Sigmoid colon (tissue), 7 donors: ENCODE measurements at regions of chr9 and their contacts with region 1.

Region 1: GRCh38 chr9:14868772-14869583 is 41.2 kb downstream of the FREM1 start:
- DNase-seq: no peak
- H3K4me3 ChIP-seq: no peak overlapping the region
- H3K27ac ChIP-seq: peak overlapping the region in 3 of 4 donors; percentile 49 to 88 (median 79)
- H3K4me1 ChIP-seq: peaks cover 0 to 47% (median 40%) of the 10 kb centered on the region in 4 donors
- H3K27me3 ChIP-seq: no peaks in the 10 kb centered on the region
- CTCF ChIP-seq: no peak
- EP300 ChIP-seq: no peak
- POLR2A ChIP-seq: no peak

Region 2: DNA sequence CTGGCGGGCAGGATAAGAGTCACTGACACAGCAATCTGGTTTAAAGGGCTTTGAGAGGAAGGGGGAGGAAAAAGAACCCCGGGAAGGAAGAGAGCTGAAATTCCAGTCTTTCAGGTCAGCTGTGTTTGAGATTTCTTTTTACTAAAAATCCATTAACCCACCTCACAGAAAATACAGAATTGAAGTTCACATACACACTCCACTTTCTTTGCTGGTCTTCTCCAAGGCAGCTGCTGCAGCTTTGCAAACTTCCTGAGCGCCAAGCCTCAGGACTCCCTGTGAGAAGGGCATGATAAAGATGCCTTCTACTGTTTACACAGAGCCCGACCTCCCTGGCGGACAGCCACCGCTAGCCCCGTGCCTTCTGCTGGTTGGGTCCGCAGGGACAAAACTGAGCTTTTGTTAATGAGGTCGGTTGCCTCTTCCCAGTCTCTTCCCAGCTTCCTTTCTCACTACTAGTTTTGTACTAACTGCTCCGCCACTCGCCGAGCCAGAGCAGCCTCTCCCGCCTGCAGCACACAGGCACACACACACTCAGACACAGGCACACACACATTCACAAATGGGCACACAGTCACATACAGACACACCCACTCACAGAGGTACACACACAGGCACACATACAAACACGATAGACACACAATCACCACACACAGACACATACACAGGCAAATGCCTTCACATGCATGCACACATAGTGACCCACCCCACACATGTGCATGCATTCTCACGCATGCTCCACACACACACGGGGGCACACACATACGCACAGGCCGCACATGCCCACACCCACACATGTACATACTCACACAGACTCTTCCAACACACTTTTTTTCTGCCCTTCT is 41.2 kb after region 1 on chr9 and contains the start of gene FREM1:
- intact Hi-C with region 1: loop called (anchors 5 kb)
- DNase-seq: peak; percentile 80
- H3K4me3 ChIP-seq: peak within 1 kb of the TSS; percentile 26 to 54 (median 42)
- H3K27ac ChIP-seq: peak within 1 kb of the TSS; percentile 44 to 87 (median 74)
- H3K4me1 ChIP-seq: peaks cover 0 to 57% (median 35%) of the 10 kb centered on the region in 4 donors
- H3K27me3 ChIP-seq: no peaks in the 10 kb centered on the region
- CTCF ChIP-seq: no peak
- EP300 ChIP-seq: no peak
- POLR2A ChIP-seq: no peak
- total RNA-seq, gene FREM1: 10.6 to 45.1 (median 16.6) TPM

Region 3: DNA sequence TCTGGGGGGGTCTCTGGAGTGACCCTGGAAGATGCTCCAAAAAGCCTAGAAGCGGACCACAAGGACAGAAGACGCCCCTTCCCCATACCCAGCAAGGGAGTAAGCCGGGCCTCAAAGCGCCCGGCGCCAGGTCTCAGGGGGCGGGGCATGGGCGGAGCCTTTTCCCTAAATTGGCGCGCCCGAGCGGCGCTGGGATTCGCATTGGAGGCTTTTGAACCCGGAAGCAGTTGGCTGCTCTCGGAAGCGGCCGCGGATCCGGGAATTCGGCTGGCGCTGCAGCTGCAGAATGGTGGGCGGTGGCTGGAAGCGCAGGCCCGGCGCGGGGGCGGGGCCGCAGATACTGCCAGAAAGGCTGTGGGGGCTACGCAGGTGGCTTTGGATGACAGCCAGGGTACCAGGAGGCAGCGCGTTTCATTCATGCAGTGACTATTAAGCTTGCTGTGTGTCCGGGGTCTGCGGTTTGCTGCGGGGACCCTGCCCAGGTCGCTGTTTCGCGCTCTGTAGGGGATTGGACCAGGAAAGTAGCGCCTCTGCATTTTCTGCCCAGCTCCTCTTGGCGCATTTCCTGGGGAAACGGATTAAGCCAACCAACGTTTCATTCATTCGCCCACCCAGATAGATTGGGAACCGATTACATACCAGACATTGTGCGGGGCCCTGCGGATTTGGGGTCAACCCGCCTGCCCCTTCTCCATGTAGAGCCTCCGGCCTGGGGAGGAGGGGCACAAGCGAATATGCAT is 124.3 kb after region 1 on chr9:
- intact Hi-C with region 1: loop called (anchors 10 kb)
- DNase-seq: peak; percentile 93
- H3K4me3 ChIP-seq: peak overlapping the region; percentile 49 to 62 (median 58)
- H3K27ac ChIP-seq: peak overlapping the region in 3 of 4 donors; percentile 48 to 73 (median 62)
- H3K4me1 ChIP-seq: peaks cover 0 to 18% (median 2%) of the 10 kb centered on the region in 4 donors
- H3K27me3 ChIP-seq: no peaks in the 10 kb centered on the region
- CTCF ChIP-seq: no peak
- EP300 ChIP-seq: peak in 1 of 4 donors; percentile 29
- POLR2A ChIP-seq: peak in 1 of 2 donors; percentile 26

Region 4: DNA sequence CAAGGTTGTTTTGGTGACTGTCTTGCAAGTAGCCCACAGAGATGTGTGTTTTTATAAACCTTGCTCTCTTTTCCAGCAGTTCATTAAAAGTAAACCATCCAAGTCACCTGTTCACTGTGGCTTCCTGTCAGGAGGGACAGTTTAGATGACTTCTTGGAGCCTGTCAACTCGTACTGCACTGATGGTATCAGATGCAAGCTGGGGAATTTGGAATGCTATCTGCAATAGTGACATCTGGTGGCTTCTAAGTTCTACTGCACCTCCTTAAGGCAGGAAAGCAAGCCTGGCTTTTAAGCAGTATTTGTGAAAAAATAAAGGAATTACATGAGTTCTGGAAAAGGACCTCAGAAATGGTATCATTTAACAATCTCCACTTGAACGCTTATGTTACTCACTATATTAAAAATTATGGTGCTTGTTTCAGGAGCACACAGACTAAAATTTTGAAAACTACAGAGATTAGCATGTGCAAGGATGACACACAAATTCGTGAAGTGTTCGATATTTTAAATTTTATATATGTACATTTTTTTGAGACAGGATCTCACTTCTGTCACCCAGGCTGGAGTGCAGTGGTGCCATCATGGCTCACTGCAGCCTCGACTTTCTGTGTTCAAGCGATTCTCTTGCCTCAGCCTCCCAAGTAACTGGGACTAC is 274.0 kb after region 1 on chr9:
- intact Hi-C with region 1: no loop called
- DNase-seq: no peak
- H3K4me3 ChIP-seq: no peak overlapping the region
- H3K27ac ChIP-seq: no peak overlapping the region
- H3K4me1 ChIP-seq: peaks cover 0 to 21% (median 8%) of the 10 kb centered on the region in 4 donors
- H3K27me3 ChIP-seq: no peaks in the 10 kb centered on the region
- CTCF ChIP-seq: peak in 3 of 4 experiments; percentile 55 to 69 (median 58)
- EP300 ChIP-seq: no peak
- POLR2A ChIP-seq: no peak